ENCODE measurements at regions of chr15 and their contacts with region 1.

Region 1: DNA sequence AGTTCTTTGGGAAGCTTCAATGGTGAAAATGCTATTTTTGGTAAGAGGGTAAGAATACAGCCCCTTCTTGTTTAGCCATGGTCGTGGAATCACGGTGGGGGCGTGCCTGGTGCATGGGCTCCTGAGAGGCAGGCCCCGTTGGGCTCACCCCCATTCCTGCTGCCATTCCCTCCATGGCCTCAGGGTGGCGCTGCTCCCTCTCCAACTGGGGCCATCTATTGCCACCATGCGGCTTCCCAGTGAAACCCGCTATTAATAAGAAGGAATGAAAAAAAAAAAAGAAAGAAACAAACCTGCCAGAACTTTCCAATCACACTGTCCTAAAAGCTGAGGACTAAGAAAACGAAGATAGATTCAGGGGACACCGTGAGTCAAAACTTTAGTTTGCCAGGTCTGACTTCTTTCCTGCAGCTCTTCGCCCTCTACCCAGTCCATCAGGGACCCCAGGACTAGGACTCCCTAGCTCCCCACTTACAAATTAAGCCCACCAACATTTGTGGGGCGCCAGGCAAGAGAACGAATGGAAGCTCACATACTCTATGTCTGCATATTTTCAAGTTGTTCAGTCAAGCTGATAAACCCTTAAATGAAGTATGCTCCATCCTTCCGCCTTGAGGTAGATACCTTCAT is 30.6 kb upstream of the ABHD2 start:
- DNase-seq: peak; percentile 90
- ATAC-seq: peak; percentile 96
- H3K4me3 Mint-ChIP-seq: no peak overlapping the region
- H3K27ac Mint-ChIP-seq: no peak overlapping the region
- H3K4me1 Mint-ChIP-seq: peaks cover 7% of the 10 kb centered on the region
- H3K27me3 Mint-ChIP-seq: no peaks in the 10 kb centered on the region

Region 2: DNA sequence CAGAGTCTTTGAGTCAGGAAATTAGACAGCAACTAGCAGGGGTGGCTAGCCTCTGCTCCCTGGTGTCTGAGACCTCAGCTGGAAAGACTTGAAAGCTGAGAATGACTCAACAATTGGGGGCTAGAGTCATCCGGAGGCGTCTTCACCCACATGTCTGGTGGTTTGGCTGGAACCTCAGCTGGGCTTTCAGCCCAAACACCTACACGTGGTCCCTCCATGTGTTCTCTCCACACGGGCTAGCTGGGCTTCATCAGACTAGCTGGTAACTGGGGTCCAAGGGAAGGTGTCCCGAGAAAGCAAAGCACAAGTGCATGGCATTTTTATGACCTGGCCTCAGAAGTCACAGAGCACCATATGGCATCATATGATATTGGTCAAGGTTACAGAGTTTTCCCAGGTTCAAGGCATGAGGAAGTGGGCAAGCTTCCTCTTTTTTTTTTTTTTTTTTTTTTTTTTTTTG is 10.7 kb after region 1 on chr15:
- CTCF ChIA-PET with region 1: interaction called, 21 read pairs
- POLR2A ChIA-PET with region 1: no interaction called
- intact Hi-C with region 1: no loop called
- DNase-seq: peak; percentile 70
- ATAC-seq: peak; percentile 87
- H3K4me3 Mint-ChIP-seq: no peak overlapping the region
- H3K27ac Mint-ChIP-seq: peak overlapping the region; percentile 31
- H3K4me1 Mint-ChIP-seq: peaks cover 13% of the 10 kb centered on the region
- H3K27me3 Mint-ChIP-seq: no peaks in the 10 kb centered on the region

Region 3: DNA sequence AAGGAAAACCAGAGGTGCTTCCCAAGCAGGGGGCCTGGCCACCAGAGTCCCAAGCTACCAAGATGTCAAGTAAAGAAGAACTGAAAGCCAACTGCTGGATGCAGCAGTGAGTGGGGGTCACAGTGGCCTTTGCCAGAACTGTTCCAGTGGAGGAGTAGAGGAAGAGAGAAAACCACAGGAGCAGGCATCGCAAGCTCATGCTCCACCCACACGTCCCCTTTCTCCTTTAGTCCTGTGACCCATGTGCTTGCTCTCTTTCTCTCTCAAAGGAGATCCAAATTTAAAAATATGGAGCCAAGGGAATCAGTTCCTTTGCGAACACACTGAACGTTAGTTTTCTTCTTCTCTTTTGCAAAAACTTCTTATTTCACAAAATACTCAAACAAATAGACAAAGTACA is 18.2 kb after region 1 on chr15:
- CTCF ChIA-PET with region 1: interaction called, 21 read pairs
- POLR2A ChIA-PET with region 1: interaction called, 7 read pairs
- intact Hi-C with region 1: no loop called
- DNase-seq: no peak
- ATAC-seq: no peak
- H3K4me3 Mint-ChIP-seq: no peak overlapping the region
- H3K27ac Mint-ChIP-seq: no peak overlapping the region
- H3K4me1 Mint-ChIP-seq: peaks cover 22% of the 10 kb centered on the region
- H3K27me3 Mint-ChIP-seq: peaks cover 2% of the 10 kb centered on the region

Region 4: DNA sequence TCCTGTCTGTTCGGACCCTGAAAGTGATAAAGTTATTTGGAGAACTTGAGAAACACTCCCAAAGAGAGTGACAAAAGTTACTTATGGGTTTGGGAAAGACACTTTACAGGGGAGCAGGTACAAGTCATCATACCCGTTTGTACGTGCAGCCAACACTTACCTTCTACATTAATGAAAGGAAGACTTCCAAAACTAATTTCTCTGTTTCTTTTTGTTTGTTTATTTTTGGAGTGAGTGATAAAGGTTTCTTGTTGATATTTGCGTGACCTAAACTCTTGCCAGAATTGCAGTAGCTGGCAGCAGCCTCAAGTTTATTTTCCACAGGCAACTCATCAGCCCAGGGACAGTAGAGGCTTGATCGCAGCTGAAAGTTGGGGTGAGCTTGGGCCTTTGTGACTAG is 39.0 kb after region 1 on chr15:
- CTCF ChIA-PET with region 1: interaction called, 19 read pairs
- POLR2A ChIA-PET with region 1: no interaction called
- intact Hi-C with region 1: no loop called
- DNase-seq: no peak
- ATAC-seq: no peak
- H3K4me3 Mint-ChIP-seq: no peak overlapping the region
- H3K27ac Mint-ChIP-seq: no peak overlapping the region
- H3K4me1 Mint-ChIP-seq: peaks cover 31% of the 10 kb centered on the region
- H3K27me3 Mint-ChIP-seq: no peaks in the 10 kb centered on the region

Region 5: GRCh38 chr15:89129123-89129815 is 71.7 kb after region 1 on chr15:
- CTCF ChIA-PET with region 1: interaction called, 68 read pairs
- POLR2A ChIA-PET with region 1: interaction called, 3 read pairs
- intact Hi-C with region 1: loop called (anchors 1 kb)
- DNase-seq: peak; percentile 75
- ATAC-seq: peak; percentile 25
- H3K4me3 Mint-ChIP-seq: no peak overlapping the region
- H3K27ac Mint-ChIP-seq: no peak overlapping the region
- H3K4me1 Mint-ChIP-seq: peaks cover 28% of the 10 kb centered on the region
- H3K27me3 Mint-ChIP-seq: no peaks in the 10 kb centered on the region

Region 6: DNA sequence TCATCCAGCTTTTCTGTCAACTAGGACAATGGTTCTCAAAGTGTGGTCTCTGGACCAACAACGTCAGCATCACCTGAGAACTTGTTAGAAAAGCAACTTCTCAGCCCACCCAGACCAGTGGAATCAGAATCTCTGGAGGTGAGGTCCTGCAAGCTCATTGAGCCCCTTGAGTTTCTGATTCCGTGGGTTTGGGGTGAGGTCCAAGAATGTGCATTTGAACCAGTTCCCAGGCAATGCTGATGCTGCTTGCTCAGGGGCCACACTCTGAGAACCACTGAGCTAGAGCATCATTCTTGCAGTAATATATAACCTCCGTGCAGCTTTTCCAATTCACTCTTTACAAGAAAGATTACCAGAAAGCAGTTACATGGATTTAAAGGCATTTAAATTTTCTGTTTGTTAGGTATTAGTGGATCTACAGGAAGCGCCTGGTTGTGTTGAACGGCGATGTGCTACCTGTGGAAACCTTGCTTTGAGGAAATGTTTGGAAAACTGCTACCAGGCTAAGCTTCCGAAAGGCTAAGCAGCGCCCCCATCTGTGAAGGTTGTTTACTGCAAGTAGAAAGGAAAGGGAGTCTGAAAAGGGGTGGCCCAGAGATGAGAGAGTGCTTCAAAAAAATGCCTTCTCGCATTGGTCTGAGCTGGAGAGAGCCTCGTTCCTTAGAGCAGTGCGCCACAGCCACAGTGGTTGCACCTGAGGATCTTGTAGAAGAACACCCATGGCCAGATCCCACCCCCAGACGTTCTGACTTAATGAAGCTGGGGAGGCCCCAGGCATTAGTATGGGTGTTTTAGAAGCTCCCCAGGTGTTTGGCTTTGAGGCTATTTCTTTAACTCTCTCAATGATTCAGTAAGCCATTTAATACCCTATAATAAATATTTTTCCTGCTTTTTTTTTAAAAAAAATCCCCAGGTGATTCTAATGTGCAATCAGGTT is 113.8 kb after region 1 on chr15:
- CTCF ChIA-PET with region 1: interaction called, 50 read pairs
- POLR2A ChIA-PET with region 1: no interaction called
- intact Hi-C with region 1: loop called in 1 of 2 experiments (anchors 1 kb)
- DNase-seq: peak; percentile 65
- ATAC-seq: no peak
- H3K4me3 Mint-ChIP-seq: no peak overlapping the region
- H3K27ac Mint-ChIP-seq: no peak overlapping the region
- H3K4me1 Mint-ChIP-seq: peaks cover 30% of the 10 kb centered on the region
- H3K27me3 Mint-ChIP-seq: no peaks in the 10 kb centered on the region

Region 7: GRCh38 chr15:89243691-89244471 is 186.3 kb after region 1 on chr15 and contains the start of gene FANCI:
- CTCF ChIA-PET with region 1: no interaction called
- POLR2A ChIA-PET with region 1: no interaction called
- intact Hi-C with region 1: loop called in 1 of 2 experiments (anchors 2 kb)
- DNase-seq: peak; percentile 98
- ATAC-seq: peak; percentile 96
- H3K4me3 Mint-ChIP-seq: peak within 1 kb of the TSS; percentile 93
- H3K27ac Mint-ChIP-seq: peak within 1 kb of the TSS; percentile 93
- H3K4me1 Mint-ChIP-seq: peaks cover 29% of the 10 kb centered on the region
- H3K27me3 Mint-ChIP-seq: no peaks in the 10 kb centered on the region
- total RNA-seq, gene FANCI: 150 to 199 TPM

Measured in activated CD4-positive, alpha-beta T cell treated with anti-CD3 and anti-CD28 coated beads for 36 hours (primary cell).